ENCODE measurements at regions of chr16 and their contacts with region 1.

Region 1: DNA sequence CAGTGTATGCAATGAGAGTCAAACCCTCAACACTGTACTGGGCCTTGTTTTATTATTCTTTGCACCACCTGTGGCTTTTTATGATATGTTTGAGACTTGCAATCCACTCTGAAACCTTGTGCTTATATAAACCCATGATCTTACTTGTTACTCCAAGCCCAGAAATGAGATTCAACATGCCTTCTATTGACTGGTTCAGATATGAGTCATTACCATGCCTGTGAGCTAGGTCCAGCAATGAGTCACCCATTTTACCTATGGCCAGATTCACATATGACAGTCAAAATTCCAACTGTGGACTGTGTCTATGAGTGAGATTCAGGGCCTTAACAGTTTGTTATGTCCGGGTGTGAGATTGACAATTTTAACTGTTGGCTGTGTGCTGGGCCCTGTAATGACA is 1846.1 kb downstream of the TP53TG3F start:
- DNase-seq: no peak
- ATAC-seq: no peak
- H3K4me3 Mint-ChIP-seq: no peak overlapping the region
- H3K27ac Mint-ChIP-seq: no peak overlapping the region
- H3K4me1 Mint-ChIP-seq: no peaks in the 10 kb centered on the region
- H3K27me3 Mint-ChIP-seq: no peaks in the 10 kb centered on the region
- CTCF ChIP-seq: no peak

Region 2: DNA sequence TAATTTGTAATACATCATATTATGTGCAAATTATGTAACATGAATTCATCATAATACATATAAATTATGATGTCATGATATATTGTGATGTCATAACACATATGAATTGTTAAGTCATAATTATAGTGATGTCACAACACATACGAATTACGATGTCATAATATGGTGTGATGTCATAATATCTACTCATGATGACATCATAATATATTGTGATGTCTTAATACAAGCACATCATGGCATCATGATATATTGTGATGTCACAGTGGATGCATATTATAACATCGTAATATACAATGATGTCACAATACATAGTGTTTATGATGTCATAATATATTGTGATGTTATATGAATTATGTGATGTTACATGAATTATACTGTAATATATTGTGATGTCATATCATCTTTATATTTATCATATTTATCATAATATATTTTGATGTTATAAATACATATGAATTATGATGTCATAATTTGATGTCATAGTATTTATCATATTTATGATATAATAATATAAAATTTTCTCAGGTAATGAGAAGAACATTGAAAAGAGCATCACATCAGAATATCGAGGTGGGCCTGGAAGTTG is 53.0 kb before region 1 on chr16:
- CTCF ChIA-PET with region 1: no interaction called
- POLR2A ChIA-PET with region 1: no interaction called
- intact Hi-C with region 1: loop called (anchors 10 kb)
- DNase-seq: no peak
- ATAC-seq: no peak
- H3K4me3 Mint-ChIP-seq: no peak overlapping the region
- H3K27ac Mint-ChIP-seq: no peak overlapping the region
- H3K4me1 Mint-ChIP-seq: no peaks in the 10 kb centered on the region
- H3K27me3 Mint-ChIP-seq: no peaks in the 10 kb centered on the region
- CTCF ChIP-seq: no peak

Region 3: GRCh38 chr16:35319536-35320192 is 14.2 kb after region 1 on chr16:
- CTCF ChIA-PET with region 1: no interaction called
- POLR2A ChIA-PET with region 1: no interaction called
- intact Hi-C with region 1: no loop called
- DNase-seq: no peak
- ATAC-seq: no peak
- H3K4me3 Mint-ChIP-seq: no peak overlapping the region
- H3K27ac Mint-ChIP-seq: no peak overlapping the region
- H3K4me1 Mint-ChIP-seq: no peaks in the 10 kb centered on the region
- H3K27me3 Mint-ChIP-seq: no peaks in the 10 kb centered on the region
- CTCF ChIP-seq: no peak

Region 4: GRCh38 chr16:35339337-35339736 is 33.9 kb after region 1 on chr16:
- CTCF ChIA-PET with region 1: no interaction called
- POLR2A ChIA-PET with region 1: no interaction called
- intact Hi-C with region 1: no loop called
- DNase-seq: no peak
- ATAC-seq: no peak
- H3K4me3 Mint-ChIP-seq: no peak overlapping the region
- H3K27ac Mint-ChIP-seq: no peak overlapping the region
- H3K4me1 Mint-ChIP-seq: no peaks in the 10 kb centered on the region
- H3K27me3 Mint-ChIP-seq: no peaks in the 10 kb centered on the region
- CTCF ChIP-seq: no peak

Region 5: DNA sequence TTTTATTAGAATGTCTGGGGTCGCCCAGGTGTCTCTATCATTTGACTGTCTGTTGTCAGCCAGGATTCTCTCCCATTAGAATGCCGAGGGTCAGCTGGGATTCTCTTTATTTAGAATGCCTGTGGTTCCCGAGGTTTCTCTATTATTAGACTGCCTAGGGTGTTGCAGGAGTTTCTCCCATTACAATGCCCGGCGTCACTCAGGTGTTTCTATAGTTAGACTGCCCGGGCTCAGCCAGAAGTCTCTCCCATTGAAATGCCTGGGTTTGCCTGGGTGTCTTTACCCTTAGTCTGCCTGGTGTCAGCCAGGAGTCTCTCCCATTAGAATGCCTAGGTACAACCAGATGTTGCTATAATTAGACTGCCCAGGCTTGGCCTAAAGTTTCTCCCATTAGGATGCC is 406.0 kb after region 1 on chr16:
- CTCF ChIA-PET with region 1: no interaction called
- POLR2A ChIA-PET with region 1: no interaction called
- intact Hi-C with region 1: no loop called
- DNase-seq: no peak
- ATAC-seq: no peak
- H3K4me3 Mint-ChIP-seq: no peak overlapping the region
- H3K27ac Mint-ChIP-seq: no peak overlapping the region
- H3K4me1 Mint-ChIP-seq: no peaks in the 10 kb centered on the region
- H3K27me3 Mint-ChIP-seq: no peaks in the 10 kb centered on the region
- CTCF ChIP-seq: no peak

Measured in activated B cell treated with CpG ODN at 0.5 μM for 24 hours (primary cell).